Endothelial cell of umbilical vein (primary cell): ENCODE measurements at regions of chr3 and their contacts with region 1.

Region 1: DNA sequence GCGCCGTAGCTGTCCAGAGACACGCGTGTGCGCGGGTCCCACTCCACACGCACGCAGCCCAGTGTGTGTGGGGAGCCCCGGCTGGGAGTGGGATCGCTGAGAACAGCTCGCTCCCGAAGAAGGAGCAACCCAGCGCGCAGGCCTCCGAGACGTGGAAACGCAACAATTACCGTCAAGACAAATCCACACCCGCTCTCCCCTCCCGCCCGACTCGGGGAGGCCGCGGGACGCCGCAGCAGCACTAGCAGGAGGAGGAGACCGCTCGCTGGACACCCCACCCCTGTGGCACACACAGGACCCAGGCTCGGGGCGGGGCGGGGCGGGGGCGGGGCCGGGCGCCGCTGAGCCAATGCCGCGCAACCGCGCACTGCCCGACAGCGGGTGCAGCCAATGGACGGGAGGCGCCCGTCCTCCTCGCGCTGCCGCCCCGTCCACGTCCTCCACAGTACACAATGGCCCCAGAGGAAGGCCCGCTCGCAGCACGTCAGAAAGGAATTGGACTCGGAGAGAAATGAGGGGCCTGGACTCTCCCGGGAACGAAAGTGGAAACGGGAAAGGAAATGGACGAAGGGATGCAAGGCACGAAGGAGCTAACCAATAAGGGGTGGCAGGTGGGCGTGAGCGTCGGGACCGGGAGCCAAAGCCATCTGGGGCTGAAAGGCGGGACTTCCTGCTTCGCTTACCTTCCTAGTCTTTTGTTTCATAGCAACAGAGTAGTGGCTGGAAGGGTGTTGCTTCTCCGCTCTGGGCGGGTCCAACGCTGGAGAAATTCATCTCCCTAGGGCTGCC is at the start of gene CBLB:
- DNase-seq: peak; percentile 96
- H3K4me3 ChIP-seq: peak within 1 kb of the TSS; percentile 84 to 97 (median 94)
- H3K27ac ChIP-seq: peak within 1 kb of the TSS; percentile 64
- H3K4me1 ChIP-seq: peaks cover 34% of the 10 kb centered on the region
- H3K27me3 ChIP-seq: no peaks in the 10 kb centered on the region
- CTCF ChIP-seq: no peak
- POLR2A ChIP-seq: no peak
- total RNA-seq, gene CBLB: 39.6 and 39.8 TPM in 2 replicates

Region 2: DNA sequence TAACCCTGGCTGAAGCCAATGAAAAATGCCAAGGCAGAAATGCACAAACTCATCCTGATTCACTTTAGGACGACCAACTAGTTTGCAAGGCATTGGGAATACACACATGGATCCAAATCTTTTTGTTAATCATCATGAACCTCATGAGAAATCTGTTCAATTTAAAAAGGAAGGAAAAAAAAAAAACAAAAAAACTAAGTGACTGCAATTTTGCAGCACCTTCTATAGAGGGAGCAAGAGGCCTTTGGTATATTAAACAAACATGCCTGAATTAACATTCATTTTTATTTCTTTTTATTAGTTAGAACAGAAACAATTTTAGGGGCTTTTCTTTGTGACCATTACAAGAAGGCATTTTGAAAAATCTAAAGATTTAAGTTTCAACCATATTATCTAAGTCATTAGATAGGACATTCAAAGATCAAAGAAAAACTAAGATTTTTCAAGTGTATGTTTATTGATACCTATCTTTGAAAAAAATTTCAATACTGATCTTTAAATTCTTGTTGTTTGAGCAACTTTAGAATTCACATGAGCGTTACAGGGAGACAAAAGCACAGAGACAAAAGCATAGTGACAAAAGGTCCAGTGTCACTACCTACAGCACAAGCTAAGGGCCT is 182.5 kb before region 1 on chr3:
- CTCF ChIA-PET with region 1: interaction called, 7 read pairs
- POLR2A ChIA-PET with region 1: no interaction called
- dilution Hi-C with region 1: no loop called
- intact Hi-C with region 1: loop called (anchors 2 kb)
- DNase-seq: peak; percentile 24
- H3K4me3 ChIP-seq: no peak overlapping the region
- H3K27ac ChIP-seq: no peak overlapping the region
- H3K4me1 ChIP-seq: no peaks in the 10 kb centered on the region
- H3K27me3 ChIP-seq: no peaks in the 10 kb centered on the region
- CTCF ChIP-seq: peak; percentile 58
- POLR2A ChIP-seq: no peak

Region 3: GRCh38 chr3:105827959-105828358 is 41.0 kb before region 1 on chr3:
- CTCF ChIA-PET with region 1: interaction called, 4 read pairs
- POLR2A ChIA-PET with region 1: no interaction called
- dilution Hi-C with region 1: no loop called
- intact Hi-C with region 1: loop called (anchors 2 kb)
- DNase-seq: peak; percentile 66
- H3K4me3 ChIP-seq: no peak overlapping the region
- H3K27ac ChIP-seq: no peak overlapping the region
- H3K4me1 ChIP-seq: peaks cover 23% of the 10 kb centered on the region
- H3K27me3 ChIP-seq: no peaks in the 10 kb centered on the region
- CTCF ChIP-seq: peak; percentile 20 to 37
- POLR2A ChIP-seq: no peak

Region 4: DNA sequence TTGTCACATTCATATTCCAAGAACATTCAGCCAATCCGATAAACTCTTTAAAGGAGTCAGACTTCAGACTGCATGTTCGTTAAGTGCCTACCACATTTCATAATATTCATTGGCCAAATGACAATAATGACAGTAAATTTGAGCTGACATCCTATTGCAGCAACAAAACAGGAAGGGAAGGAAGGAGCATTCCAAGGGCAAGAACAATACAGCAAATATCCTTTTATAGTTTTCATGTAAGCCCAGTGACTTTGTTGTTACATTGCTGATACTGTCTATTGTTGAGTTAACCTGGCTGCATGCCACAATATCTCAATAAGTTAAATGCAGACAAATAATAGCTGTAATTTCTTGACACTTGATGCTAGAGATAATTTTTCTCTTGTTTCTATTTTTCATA is 16.3 kb after region 1 on chr3:
- CTCF ChIA-PET with region 1: interaction called, 3 read pairs
- POLR2A ChIA-PET with region 1: no interaction called
- dilution Hi-C with region 1: no loop called
- intact Hi-C with region 1: loop called (anchors 1 kb)
- DNase-seq: peak; percentile 85
- H3K4me3 ChIP-seq: no peak overlapping the region
- H3K27ac ChIP-seq: no peak overlapping the region
- H3K4me1 ChIP-seq: peaks cover 9% of the 10 kb centered on the region
- H3K27me3 ChIP-seq: no peaks in the 10 kb centered on the region
- CTCF ChIP-seq: no peak
- POLR2A ChIP-seq: no peak

Region 5: GRCh38 chr3:106206146-106206545 is 337.2 kb after region 1 on chr3:
- CTCF ChIA-PET with region 1: interaction called, 3 read pairs
- POLR2A ChIA-PET with region 1: no interaction called
- dilution Hi-C with region 1: no loop called
- intact Hi-C with region 1: loop called (anchors 2 kb)
- DNase-seq: peak; percentile 83
- H3K4me3 ChIP-seq: peak overlapping the region in 1 of 3 experiments; percentile 35
- H3K27ac ChIP-seq: peak overlapping the region; percentile 32
- H3K4me1 ChIP-seq: peaks cover 16% of the 10 kb centered on the region
- H3K27me3 ChIP-seq: no peaks in the 10 kb centered on the region
- CTCF ChIP-seq: no peak
- POLR2A ChIP-seq: no peak

Region 6: GRCh38 chr3:106566277-106566676 is 697.3 kb after region 1 on chr3:
- CTCF ChIA-PET with region 1: no interaction called
- POLR2A ChIA-PET with region 1: no interaction called
- dilution Hi-C with region 1: no loop called
- intact Hi-C with region 1: loop called (anchors 5 kb)
- DNase-seq: no peak
- H3K4me3 ChIP-seq: no peak overlapping the region
- H3K27ac ChIP-seq: peak overlapping the region; percentile 29
- H3K4me1 ChIP-seq: peaks cover 15% of the 10 kb centered on the region
- H3K27me3 ChIP-seq: no peaks in the 10 kb centered on the region
- CTCF ChIP-seq: peak in 1 of 2 donors; percentile 6
- POLR2A ChIP-seq: no peak

Region 7: GRCh38 chr3:106745344-106746168 is 876.6 kb after region 1 on chr3:
- CTCF ChIA-PET with region 1: no interaction called
- POLR2A ChIA-PET with region 1: no interaction called
- dilution Hi-C with region 1: no loop called
- intact Hi-C with region 1: loop called (anchors 2 kb)
- DNase-seq: peak; percentile 96
- H3K4me3 ChIP-seq: peak overlapping the region in 1 of 3 experiments; percentile 52
- H3K27ac ChIP-seq: peak overlapping the region; percentile 92
- H3K4me1 ChIP-seq: peaks cover 36% of the 10 kb centered on the region
- H3K27me3 ChIP-seq: no peaks in the 10 kb centered on the region
- CTCF ChIP-seq: no peak
- POLR2A ChIP-seq: no peak